GM10248 (cell line): ENCODE measurements at regions of chr10 and their contacts with region 1.

Region 1: DNA sequence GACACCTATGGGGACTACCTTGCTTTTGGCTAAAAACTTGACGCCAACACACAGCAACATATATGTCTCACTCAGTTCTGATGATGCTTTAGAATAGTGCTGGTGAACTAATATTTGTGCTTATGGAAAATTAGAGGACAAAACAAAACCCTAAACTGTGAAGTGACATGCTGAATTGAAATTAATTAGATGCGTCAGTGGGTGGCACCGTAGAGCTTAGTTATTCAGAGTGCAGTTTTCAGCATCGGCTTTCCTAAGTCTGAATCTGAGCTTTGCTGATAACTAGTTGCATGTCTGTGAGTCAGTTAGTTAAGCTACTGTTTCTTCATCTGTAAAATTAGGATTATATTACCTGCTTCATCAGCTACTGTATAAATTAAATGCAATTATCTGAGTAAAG is 245.0 kb upstream of the SORCS1 start:
- DNase-seq: no peak
- CTCF ChIP-seq: peak; percentile 63

Region 2: DNA sequence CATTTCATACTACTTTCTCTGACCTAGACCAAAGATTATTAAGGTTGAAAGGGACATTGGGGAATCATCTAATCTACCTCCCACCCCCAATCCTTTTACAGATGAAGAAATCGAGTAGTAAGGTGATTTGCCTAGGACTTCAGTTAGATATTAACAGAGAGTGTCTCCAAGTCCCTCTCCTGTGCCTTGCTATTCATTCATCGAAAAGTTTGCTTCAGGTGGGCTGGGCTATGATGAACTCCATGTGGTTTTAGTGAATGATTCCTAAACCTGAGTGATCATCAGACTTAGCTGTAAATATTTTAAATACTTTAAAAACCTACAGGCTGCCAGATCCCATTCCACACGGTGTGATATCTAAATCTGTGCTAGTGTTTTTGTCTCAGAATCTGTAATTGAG is 14.4 kb after region 1 on chr10:
- CTCF ChIA-PET with region 1: interaction called, 13 read pairs
- POLR2A ChIA-PET with region 1: no interaction called
- DNase-seq: no peak
- CTCF ChIP-seq: no peak

Region 3: DNA sequence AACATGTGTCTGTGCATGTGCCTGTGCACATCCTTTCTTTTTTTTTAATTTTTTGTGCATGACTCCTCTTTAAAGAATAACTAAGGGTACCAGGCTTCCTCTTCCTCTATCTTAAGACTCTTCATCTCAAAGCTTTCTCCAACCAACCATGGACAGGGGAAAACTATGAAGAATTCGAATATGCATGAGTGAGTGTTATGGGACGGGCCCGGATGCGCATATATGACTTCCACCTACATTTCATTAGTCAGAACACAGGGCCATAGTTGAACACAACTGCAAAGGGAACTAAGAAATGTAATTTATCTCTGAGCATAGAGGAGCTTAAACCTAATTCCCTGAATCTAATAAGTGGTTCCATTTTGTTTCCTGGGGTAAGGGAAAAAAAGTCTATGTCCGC is 25.3 kb after region 1 on chr10:
- CTCF ChIA-PET with region 1: interaction called, 12 read pairs
- POLR2A ChIA-PET with region 1: no interaction called
- DNase-seq: no peak
- CTCF ChIP-seq: no peak

Region 4: GRCh38 chr10:107442035-107442505 is 32.5 kb after region 1 on chr10:
- CTCF ChIA-PET with region 1: interaction called, 19 read pairs
- POLR2A ChIA-PET with region 1: no interaction called
- DNase-seq: peak; percentile 15
- CTCF ChIP-seq: no peak

Region 5: DNA sequence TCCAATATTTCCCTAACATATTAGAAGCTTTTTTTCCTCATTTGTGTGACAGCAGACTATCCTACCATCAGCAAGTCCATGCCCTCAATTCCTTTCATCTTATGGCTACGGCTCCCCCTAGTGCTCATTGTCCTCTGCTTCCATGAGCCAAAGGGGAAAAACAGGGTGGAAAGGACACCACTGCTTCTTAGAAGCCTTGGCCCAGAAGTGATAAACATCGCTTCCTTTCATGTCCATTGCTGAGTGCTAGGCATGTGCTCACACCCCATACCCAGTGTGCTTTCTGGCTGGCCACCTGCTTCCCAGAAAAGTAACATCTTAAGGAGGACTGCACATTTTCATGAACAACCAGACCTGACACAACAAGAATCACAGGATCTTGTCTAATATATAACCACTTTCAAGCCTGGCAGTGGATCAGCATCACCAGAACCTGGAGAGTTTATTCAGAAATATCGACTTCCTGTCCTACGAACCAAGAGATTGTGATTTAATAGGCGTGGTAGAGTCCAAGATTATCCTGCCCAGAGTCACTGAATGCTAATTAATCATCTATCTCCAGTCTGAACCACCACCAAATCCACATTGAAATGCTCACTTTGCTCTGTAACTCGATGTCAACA is 405.5 kb after region 1 on chr10:
- CTCF ChIA-PET with region 1: interaction called, 34 read pairs
- POLR2A ChIA-PET with region 1: no interaction called
- DNase-seq: peak; percentile 20
- CTCF ChIP-seq: peak; percentile 70

Region 6: DNA sequence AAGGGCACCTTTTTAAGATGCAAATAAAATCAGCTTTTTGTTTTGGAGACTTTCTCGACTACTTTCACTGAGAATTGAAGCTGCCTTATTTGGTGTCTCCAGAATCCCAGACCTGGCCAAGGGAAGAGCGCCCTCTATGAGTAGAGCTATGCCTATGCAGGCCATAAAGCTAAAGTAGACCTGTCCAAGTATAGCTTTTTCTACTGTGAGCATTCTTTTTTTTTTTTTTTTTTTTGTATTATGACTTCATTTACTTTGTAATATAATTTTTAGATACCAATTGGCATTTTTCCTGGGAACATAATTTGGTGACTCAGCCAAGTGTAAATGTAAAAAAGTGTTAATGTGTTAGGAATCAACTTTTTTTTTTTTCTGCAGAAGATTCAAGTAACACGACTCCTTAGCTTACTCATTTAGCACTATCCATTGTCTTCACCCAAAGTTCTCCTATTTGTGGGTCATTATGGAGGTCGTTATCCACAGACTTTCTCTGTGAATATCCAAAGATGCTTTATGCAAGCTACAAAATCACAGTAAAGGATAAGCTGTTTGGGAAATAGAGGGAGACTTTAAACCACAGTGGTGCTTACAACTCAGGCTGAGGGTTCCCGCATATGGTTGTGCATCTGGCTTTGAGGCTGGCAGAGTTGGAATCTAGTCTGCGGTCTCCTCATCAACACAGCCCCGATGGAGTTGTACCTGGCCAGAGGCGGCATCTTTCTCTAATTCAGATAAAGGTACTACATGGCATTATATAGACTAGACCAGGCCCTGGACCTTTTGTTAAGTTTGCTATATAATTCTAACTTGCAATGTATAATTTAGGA is 795.2 kb after region 1 on chr10:
- CTCF ChIA-PET with region 1: interaction called, 19 read pairs
- POLR2A ChIA-PET with region 1: no interaction called
- DNase-seq: peak; percentile 22
- CTCF ChIP-seq: peak; percentile 74